ENCODE measurements at regions of chr12 and their contacts with region 1.

Region 1: GRCh38 chr12:96035278-96036236 is at the start of gene LTA4H:
- DNase-seq: peak; percentile 98
- H3K4me3 Mint-ChIP-seq: no peak within 1 kb of the TSS
- H3K27ac Mint-ChIP-seq: no peak within 1 kb of the TSS
- H3K4me1 Mint-ChIP-seq: peaks cover 19% of the 10 kb centered on the region
- H3K27me3 Mint-ChIP-seq: no peaks in the 10 kb centered on the region
- total RNA-seq, gene LTA4H: 125 TPM

Region 2: DNA sequence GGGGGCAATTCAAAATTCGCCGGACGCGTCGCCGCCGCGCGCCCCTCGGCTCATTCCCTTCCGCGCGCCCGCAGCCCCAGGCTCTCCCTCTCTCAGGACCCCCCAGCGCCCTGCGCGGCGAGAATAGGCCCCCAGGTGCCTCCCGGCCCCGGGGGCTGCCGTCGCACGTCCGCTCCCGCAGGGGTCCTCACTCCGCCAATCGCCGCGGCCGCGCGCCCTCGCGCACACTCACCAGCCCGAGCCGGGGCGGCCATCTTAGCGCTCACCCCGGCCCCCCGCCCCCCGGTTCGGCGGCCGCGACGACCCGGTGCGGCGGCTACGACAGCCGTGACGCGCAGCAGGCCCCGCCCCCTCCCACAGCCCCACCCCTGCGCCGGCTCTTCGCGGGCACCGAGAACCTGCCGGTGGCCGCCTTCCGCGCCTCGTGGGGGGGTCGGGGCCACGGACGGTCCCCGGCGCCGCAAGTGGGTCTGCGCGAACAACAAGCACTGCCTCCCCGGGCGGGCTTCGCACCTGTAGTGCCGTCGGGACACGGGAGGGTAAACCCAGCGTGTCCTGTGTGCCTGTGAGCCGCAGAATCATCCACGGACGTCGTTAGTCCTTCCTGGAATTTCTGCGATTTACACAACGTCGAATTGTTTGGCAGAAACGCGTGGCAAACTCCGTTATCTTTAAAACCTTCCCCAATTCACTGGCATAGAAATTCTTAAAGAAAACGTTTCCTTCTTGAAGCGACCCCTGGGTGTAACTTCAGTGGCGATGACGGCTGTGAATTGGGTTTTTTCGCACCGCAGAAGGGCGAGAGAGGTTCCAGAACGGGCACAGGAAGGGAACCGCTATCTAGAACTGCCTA is 486.8 kb before region 1 on chr12:
- CTCF ChIA-PET with region 1: no interaction called
- intact Hi-C with region 1: loop called (anchors 2 kb)
- DNase-seq: peak; percentile 75
- H3K4me3 Mint-ChIP-seq: peak overlapping the region; percentile 89
- H3K27ac Mint-ChIP-seq: peak overlapping the region; percentile 80
- H3K4me1 Mint-ChIP-seq: peaks cover 41% of the 10 kb centered on the region
- H3K27me3 Mint-ChIP-seq: no peaks in the 10 kb centered on the region

Region 3: GRCh38 chr12:95918194-95918993 is 117.2 kb before region 1 on chr12:
- CTCF ChIA-PET with region 1: interaction called, 3 read pairs
- intact Hi-C with region 1: loop called (anchors 1 kb)
- DNase-seq: peak; percentile 65
- H3K4me3 Mint-ChIP-seq: no peak overlapping the region
- H3K27ac Mint-ChIP-seq: no peak overlapping the region
- H3K4me1 Mint-ChIP-seq: no peaks in the 10 kb centered on the region
- H3K27me3 Mint-ChIP-seq: peaks cover 2% of the 10 kb centered on the region

Region 4: GRCh38 chr12:96108321-96108720 is 72.8 kb after region 1 on chr12:
- CTCF ChIA-PET with region 1: no interaction called
- intact Hi-C with region 1: loop called (anchors 2 kb)
- DNase-seq: peak; percentile 66
- H3K4me3 Mint-ChIP-seq: peak overlapping the region; percentile 17
- H3K27ac Mint-ChIP-seq: peak overlapping the region; percentile 57
- H3K4me1 Mint-ChIP-seq: peaks cover 11% of the 10 kb centered on the region
- H3K27me3 Mint-ChIP-seq: no peaks in the 10 kb centered on the region

Region 5: DNA sequence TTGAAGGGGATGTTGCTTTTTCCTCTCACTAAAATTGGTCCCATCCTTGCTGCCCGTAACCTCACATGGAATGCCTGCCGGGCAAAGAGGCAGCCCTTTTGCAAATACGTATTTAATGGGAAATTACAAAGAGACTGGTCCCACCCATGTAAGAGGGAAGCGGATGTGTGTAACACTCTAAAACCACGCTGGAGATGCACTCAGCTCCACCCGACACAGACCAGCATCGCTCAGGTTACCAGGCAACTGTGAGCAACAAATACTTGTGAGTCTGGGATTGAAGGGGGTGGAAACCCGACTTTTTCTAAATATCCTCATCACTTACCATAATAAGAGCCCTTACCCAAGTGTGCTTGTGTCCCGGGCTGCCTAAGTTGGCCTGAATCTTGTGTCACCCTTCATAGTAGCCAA is 206.3 kb after region 1 on chr12:
- CTCF ChIA-PET with region 1: no interaction called
- intact Hi-C with region 1: no loop called
- DNase-seq: peak; percentile 75
- H3K4me3 Mint-ChIP-seq: no peak overlapping the region
- H3K27ac Mint-ChIP-seq: no peak overlapping the region
- H3K4me1 Mint-ChIP-seq: peaks cover 49% of the 10 kb centered on the region
- H3K27me3 Mint-ChIP-seq: no peaks in the 10 kb centered on the region

Region 6: DNA sequence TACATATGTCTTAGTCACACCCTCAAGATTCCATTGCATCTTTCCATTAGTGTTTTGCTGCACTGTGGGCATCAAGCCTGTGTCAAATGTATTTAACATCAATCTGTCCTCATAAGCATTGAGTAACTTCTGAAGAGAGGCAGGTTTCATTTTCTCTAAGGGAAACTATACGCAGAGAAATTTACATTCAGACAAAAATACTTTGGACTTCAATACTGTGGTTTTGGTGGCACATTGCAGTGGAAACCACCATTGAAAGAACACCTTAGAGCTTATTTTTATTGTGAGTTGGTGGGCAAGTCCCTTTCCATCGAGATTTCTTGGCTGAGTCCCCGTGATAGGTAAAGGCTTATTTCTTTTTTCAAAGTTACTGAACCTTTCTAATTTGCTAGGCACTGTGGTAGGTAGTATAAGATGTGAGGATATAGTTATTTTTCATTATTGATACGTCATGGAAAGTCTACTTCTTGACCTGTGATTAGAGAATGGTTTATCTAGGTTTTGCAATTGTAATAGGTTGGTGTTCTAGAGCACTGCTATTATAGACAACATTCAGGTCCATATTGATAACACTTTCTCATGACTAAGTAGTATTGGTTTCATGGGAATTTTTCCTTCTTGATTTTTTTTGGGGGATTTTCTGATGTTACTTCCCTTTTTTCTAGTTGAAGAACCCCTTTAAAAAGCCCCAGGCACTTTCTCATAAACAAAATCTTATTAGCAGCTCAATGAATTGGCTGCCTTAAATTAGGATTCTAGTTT is 535.7 kb after region 1 on chr12:
- CTCF ChIA-PET with region 1: no interaction called
- intact Hi-C with region 1: loop called (anchors 1 kb)
- DNase-seq: peak; percentile 58
- H3K4me3 Mint-ChIP-seq: peak overlapping the region; percentile 27
- H3K27ac Mint-ChIP-seq: peak overlapping the region; percentile 15
- H3K4me1 Mint-ChIP-seq: peaks cover 27% of the 10 kb centered on the region
- H3K27me3 Mint-ChIP-seq: peaks cover 7% of the 10 kb centered on the region

Measured in activated naive CD4-positive, alpha-beta T cell treated with anti-CD3 and anti-CD28 coated beads for 36 hours (primary cell).